Activated CD8-positive, alpha-beta T cell treated with anti-CD3 and anti-CD28 coated beads, Interleukin-2, amount 10 ng/mL, durations not matched to agents 7 days and 5 days (primary cell): ENCODE measurements at regions of chr21 and their contacts with region 1.

Region 1: GRCh38 chr21:25561668-25562641 is 45.3 kb downstream of the MRPL39 start:
- DNase-seq: peak; percentile 79
- ATAC-seq: peak; percentile 74
- H3K4me3 Mint-ChIP-seq: peak overlapping the region; percentile 88
- H3K27ac Mint-ChIP-seq: peak overlapping the region; percentile 92
- H3K4me1 Mint-ChIP-seq: peaks cover 59% of the 10 kb centered on the region
- H3K27me3 Mint-ChIP-seq: no peaks in the 10 kb centered on the region

Region 2: DNA sequence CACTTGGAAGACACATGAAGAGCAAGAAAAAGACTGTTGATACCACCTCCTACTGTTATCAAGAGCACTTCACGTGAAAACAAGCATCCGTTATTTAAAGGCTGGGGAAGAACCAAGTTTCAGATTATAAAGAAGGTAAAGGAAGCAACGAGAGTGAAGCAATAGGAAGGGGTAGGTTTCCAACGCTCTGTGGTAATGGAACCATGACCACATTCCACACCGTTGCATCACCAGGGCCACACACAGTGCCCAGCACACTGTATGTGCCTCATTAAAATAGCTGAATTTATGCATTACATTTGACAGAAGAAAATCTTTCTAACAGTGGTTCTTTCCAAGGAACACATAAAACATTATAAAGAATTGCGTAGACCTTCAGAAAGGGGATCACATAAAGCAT is 390.5 kb before region 1 on chr21:
- CTCF ChIA-PET with region 1: no interaction called
- POLR2A ChIA-PET with region 1: no interaction called
- DNase-seq: no peak
- ATAC-seq: no peak
- H3K4me3 Mint-ChIP-seq: no peak overlapping the region
- H3K27ac Mint-ChIP-seq: no peak overlapping the region
- H3K4me1 Mint-ChIP-seq: no peaks in the 10 kb centered on the region
- H3K27me3 Mint-ChIP-seq: no peaks in the 10 kb centered on the region

Region 3: GRCh38 chr21:25539606-25540005 is 22.3 kb before region 1 on chr21:
- CTCF ChIA-PET with region 1: no interaction called
- POLR2A ChIA-PET with region 1: no interaction called
- DNase-seq: no peak
- ATAC-seq: no peak
- H3K4me3 Mint-ChIP-seq: no peak overlapping the region
- H3K27ac Mint-ChIP-seq: no peak overlapping the region
- H3K4me1 Mint-ChIP-seq: no peaks in the 10 kb centered on the region
- H3K27me3 Mint-ChIP-seq: no peaks in the 10 kb centered on the region

Region 4: DNA sequence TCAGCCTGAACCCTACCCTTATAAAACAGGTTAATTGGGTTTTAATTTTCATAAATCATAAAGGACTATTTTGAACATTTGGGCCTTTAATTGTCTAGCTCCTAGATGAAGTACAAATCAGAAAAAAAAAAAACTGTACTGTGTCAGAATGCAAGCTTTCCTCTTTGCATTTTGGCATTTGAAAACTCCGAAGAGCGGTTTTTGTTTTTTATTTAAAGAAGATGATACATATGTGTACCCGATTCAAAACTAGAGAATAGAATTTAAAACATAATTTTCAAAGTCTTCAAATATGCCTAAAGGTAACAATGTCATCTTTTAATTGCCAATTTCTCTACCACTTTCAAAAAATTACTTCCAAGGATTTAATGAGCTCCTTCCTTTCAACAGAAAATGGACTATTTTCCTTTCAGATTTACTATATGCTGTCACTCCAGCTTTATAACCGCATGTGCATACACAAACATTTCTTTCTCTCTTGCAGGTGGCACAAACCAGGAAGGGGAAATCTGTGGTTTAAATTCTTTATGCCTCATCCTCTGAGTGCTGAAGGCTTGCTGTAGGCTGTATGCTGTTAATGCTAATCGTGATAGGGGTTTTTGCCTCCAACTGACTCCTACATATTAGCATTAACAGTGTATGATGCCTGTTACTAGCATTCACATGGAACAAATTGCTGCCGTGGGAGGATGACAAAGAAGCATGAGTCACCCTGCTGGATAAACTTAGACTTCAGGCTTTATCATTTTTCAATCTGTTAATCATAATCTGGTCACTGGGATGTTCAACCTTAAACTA is 11.7 kb after region 1 on chr21:
- CTCF ChIA-PET with region 1: interaction called, 11 read pairs
- POLR2A ChIA-PET with region 1: interaction called, 21 read pairs
- DNase-seq: peak; percentile 45
- ATAC-seq: peak; percentile 68
- H3K4me3 Mint-ChIP-seq: peak overlapping the region; percentile 75
- H3K27ac Mint-ChIP-seq: peak overlapping the region; percentile 88
- H3K4me1 Mint-ChIP-seq: peaks cover 76% of the 10 kb centered on the region
- H3K27me3 Mint-ChIP-seq: no peaks in the 10 kb centered on the region